Activated CD8-positive, alpha-beta memory T cell treated with anti-CD3 and anti-CD28 coated beads, Interleukin-2, amount 10 ng/mL, durations not matched to agents 7 days and 5 days (primary cell): ENCODE measurements at regions of chr14 and their contacts with region 1.

Region 1: GRCh38 chr14:88559852-88560251 is 3.0 kb upstream of the ZC3H14 start:
- DNase-seq: no peak
- ATAC-seq: no peak
- H3K4me3 Mint-ChIP-seq: no peak overlapping the region
- H3K27ac Mint-ChIP-seq: no peak overlapping the region
- H3K4me1 Mint-ChIP-seq: peaks cover 48% of the 10 kb centered on the region
- H3K27me3 Mint-ChIP-seq: peaks cover 42% of the 10 kb centered on the region

Region 2: DNA sequence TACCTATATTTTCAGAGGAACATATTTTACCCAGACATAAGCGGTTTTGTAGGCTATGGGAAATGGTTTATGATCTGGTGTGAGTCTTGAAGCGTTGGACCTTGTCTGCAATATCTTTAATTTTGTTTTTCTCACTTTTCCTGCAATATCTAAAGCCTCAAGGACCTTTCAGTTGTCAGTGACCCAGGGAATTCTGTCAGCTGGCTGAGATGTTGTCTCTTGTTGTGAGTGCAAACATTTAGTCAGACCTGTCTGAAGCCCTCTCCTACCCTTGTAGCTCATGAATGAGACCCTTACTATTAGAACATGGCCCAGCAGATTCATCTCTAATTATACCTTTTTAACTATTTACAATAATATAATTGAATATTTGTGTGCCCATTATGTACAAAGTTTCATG is 120.8 kb before region 1 on chr14:
- CTCF ChIA-PET with region 1: no interaction called
- DNase-seq: no peak
- ATAC-seq: no peak
- H3K4me3 Mint-ChIP-seq: no peak overlapping the region
- H3K27ac Mint-ChIP-seq: no peak overlapping the region
- H3K4me1 Mint-ChIP-seq: no peaks in the 10 kb centered on the region
- H3K27me3 Mint-ChIP-seq: no peaks in the 10 kb centered on the region

Region 3: DNA sequence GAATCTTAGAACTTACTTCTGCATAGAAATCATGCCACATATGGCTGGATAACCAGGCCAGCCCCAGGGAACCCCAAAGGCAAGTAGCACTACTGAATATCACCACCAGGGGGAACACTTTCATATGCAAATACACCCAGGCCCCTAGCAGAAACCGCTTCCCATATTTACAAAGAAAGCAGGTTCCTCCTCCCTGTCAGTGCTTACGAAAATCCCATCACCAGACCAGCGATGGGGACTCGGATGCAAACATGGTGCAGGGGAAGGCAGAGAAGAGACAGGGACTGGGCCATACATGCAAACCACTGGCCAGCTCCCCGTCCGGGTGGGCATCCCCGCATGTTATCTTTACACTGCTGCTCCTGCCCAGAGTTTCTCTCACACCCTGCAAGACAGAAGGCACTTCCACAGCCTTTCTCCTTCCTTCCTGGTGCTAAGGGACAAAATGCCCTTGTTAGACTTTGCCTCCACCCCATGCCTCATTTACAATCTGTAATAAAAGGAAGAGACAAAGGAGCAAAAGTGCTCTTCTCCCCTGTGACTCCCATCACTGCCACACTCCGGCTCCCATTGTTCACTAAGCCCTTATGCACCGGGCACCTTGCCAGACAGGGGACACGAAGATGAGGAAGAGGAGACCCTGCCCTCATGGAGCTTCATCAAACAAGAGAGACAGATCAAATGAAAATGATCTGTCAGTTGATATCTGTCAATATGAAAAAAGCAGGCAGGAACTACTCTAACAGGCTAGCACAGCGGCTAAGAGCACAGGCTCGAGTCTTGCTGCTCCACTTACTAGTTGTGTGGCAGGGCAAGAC is 67.4 kb before region 1 on chr14:
- CTCF ChIA-PET with region 1: interaction called, 13 read pairs
- DNase-seq: peak; percentile 76
- ATAC-seq: peak; percentile 80
- H3K4me3 Mint-ChIP-seq: no peak overlapping the region
- H3K27ac Mint-ChIP-seq: no peak overlapping the region
- H3K4me1 Mint-ChIP-seq: no peaks in the 10 kb centered on the region
- H3K27me3 Mint-ChIP-seq: peaks cover 14% of the 10 kb centered on the region